B cell (primary cell): ENCODE measurements at regions of chr12 and their contacts with region 1.

Region 1: DNA sequence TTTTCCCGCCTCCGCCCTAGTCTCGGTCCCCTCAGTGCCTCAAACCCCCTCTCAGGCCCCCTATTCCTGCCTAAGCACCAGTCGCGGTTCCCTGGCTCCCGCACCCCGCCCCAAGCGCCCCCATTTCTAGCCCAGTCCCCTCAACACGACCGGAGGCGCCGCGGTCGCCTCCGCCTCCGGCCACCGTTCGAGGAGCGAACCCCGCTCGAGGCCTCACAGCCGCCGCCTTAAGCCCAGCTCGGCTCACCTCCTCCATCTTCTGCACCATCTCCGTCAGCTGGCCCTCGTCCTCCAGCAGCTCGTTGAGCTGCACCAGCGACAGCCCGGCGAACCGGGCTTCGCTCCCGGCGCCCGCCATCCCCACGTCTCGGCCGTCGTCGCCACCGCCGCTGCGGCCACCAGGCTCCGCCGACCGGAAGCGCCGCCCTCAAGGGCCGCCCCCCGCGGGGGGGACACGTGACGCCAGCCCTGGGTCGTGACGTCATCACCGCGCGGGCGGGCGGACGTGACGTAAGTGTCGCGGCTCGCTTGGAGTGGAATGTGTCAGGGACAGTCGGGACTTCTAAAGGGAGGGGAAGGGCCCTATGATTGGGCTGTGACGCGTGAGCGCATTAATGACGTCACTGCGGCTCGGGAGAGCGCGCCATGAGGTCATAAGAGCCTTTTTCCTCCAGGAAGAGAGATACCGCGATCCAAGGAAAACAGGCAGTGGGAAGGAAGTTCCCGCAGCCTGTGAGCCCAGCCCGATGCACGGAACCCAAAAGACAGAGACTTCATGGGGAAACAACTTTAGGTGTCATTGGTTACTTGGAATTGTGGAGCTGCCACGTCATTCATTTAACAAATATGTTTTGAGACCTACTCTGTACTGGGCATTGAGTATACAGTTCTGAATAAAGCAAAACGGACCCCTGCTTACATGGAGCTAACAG is at the start of gene VPS37B:
- DNase-seq: peak; percentile 95
- ATAC-seq: peak; percentile 29
- H3K4me3 ChIP-seq: peak within 1 kb of the TSS; percentile 74 to 98 (median 97)
- H3K4me3 Mint-ChIP-seq: peak within 1 kb of the TSS; percentile 96
- H3K27ac ChIP-seq: peak within 1 kb of the TSS; percentile 90 to 99
- H3K27ac Mint-ChIP-seq: peak within 1 kb of the TSS; percentile 94
- H3K4me1 ChIP-seq: peaks cover 90 to 91% of the 10 kb centered on the region in 2 donors
- H3K4me1 Mint-ChIP-seq: peaks cover 90% of the 10 kb centered on the region
- H3K27me3 ChIP-seq: no peaks in the 10 kb centered on the region
- H3K27me3 Mint-ChIP-seq: no peaks in the 10 kb centered on the region
- CTCF ChIP-seq: no peak
- total RNA-seq, gene VPS37B: 87.2 and 88.1 TPM in 2 replicates

Region 2: DNA sequence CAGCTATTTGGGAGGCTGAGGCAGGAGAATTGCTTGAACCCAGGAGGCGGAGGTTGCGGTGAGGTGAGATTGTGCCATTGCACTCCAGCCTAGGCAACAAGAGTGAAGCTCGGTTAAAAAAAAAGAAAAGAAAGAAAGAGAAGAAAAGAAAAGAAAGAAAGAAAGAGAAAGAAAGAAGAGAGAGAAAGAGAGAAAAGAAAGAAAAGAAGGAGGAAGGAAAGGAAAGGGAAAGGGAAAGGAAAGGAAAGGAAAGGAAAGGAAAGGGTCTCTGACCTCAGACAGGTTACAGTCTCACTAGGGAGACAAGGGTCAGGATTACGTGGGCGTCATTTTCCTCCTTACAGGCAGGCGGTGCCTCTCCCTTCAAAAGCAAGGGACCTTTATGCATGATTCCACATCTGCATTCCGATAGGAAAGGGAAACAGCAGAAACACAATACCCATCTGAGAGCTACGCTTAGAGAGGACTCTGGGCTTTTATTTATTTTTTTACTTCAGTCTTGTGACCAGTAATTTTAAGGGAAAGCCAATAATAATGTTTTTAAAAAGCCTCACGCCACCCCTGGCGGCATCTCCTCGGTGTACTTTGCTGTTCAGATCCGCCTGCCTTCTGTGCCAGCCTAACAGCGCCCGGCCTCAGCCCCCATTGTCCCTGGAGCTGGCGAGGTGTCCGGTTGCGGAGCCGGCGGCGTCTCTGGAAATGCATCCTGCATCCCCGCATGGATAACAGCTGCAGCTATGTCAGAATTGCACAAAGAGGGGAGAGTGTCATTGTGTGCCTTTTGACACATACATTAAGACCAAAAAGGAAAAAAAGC is 61.7 kb before region 1 on chr12:
- CTCF ChIA-PET with region 1: interaction called, 5 read pairs
- POLR2A ChIA-PET with region 1: no interaction called
- intact Hi-C with region 1: loop called (anchors 2 kb)
- DNase-seq: peak; percentile 65
- ATAC-seq: no peak
- H3K4me3 ChIP-seq: peak overlapping the region; percentile 24 to 99 (median 45)
- H3K4me3 Mint-ChIP-seq: peak overlapping the region; percentile 98
- H3K27ac ChIP-seq: peak overlapping the region; percentile 25 to 38
- H3K27ac Mint-ChIP-seq: peak overlapping the region; percentile 88
- H3K4me1 ChIP-seq: peaks cover 32 to 35% of the 10 kb centered on the region in 2 donors
- H3K4me1 Mint-ChIP-seq: peaks cover 40% of the 10 kb centered on the region
- H3K27me3 ChIP-seq: no peaks in the 10 kb centered on the region
- H3K27me3 Mint-ChIP-seq: no peaks in the 10 kb centered on the region
- CTCF ChIP-seq: peak; percentile 34

Region 3: DNA sequence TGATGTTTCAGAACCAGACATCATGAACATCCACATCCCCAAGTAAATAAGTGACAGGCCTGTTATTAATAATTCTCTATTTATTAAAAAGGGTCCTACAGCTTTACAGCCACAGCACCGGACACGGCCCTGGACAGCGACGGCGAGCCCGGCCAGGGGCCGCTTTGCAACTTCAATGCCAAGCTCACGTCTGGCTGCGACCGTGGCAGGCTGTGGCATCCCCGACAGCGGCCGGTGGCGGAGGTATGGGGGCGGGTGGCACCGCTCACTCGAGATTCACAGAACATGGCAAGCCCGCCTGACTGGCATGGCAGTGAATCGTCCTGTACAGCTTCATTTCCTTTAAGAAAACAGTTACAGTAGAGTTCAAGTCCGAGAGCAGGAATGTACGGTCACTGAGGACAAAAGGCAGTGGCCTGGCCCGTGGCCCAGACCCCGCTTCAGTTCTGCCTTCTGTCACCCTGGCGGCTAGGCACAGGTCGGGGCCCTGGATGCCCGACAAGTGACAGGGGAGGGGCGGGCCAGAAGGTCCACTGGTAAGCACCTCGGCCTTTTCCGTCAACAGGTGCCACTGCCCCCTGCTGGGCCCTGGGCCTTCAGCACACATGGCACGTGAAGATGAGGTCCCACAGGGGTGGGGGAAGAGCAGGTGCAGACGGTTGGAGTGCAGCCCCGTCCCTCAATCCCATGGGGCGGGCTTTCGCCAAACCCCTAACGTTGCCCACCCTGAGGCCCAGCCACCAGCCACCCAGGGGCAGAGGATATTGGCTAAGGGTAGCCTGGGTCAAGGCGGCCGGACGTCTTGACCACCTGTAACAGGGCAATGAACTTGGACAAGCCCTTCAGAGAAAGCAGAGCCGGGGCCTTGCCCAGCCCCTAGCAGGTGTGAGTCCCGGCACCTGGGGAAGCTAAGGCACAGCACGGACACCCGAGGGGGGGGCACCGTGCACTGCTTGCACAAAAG is 30.4 kb before region 1 on chr12:
- CTCF ChIA-PET with region 1: interaction called, 50 read pairs
- POLR2A ChIA-PET with region 1: interaction called, 11 read pairs
- intact Hi-C with region 1: loop called (anchors 2 kb)
- DNase-seq: peak; percentile 66
- ATAC-seq: peak; percentile 40
- H3K4me3 ChIP-seq: no peak overlapping the region
- H3K4me3 Mint-ChIP-seq: no peak overlapping the region
- H3K27ac ChIP-seq: no peak overlapping the region
- H3K27ac Mint-ChIP-seq: peak overlapping the region; percentile 83
- H3K4me1 ChIP-seq: peaks cover 54 to 73% of the 10 kb centered on the region in 2 donors
- H3K4me1 Mint-ChIP-seq: peaks cover 79% of the 10 kb centered on the region
- H3K27me3 ChIP-seq: no peaks in the 10 kb centered on the region
- H3K27me3 Mint-ChIP-seq: no peaks in the 10 kb centered on the region
- CTCF ChIP-seq: peak; percentile 53

Region 4: DNA sequence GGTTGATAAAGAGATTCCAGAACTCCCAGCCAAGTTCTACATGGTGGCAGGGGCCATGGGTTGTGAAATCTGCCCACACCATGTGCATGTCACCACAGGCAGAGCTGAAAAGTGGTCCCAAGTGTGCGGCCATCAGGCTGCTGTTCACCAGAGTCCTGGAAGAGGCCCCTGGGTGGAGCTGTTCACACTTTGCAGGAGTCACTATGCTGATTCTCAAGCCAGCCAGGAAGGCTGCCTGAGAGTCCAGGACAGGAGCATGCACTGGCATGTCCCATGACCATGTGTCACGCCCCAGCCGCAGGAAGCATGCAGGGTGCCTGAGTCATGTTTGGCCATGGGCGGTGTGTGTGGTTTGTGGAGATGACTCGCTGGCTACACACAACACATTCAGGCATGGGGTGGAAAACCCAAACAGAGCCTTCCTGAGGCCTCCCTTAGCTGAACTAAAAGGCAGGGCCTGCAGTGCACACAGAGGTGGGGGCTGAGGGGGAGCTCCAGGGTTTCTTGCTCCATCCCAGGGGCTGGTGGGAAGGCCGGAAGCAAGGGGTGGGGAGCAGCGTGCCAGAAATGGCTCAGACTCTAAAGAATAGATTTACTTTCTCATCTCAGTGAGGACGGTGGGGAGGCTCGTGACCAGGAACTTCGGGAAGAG is 50.8 kb after region 1 on chr12:
- CTCF ChIA-PET with region 1: interaction called, 29 read pairs
- POLR2A ChIA-PET with region 1: interaction called, 3 read pairs
- intact Hi-C with region 1: loop called (anchors 2 kb)
- DNase-seq: peak; percentile 46
- ATAC-seq: peak; percentile 67
- H3K4me3 ChIP-seq: no peak overlapping the region
- H3K4me3 Mint-ChIP-seq: peak overlapping the region; percentile 54
- H3K27ac ChIP-seq: no peak overlapping the region
- H3K27ac Mint-ChIP-seq: peak overlapping the region; percentile 47
- H3K4me1 ChIP-seq: peaks cover 25 to 33% of the 10 kb centered on the region in 2 donors
- H3K4me1 Mint-ChIP-seq: peaks cover 42% of the 10 kb centered on the region
- H3K27me3 ChIP-seq: no peaks in the 10 kb centered on the region
- H3K27me3 Mint-ChIP-seq: no peaks in the 10 kb centered on the region
- CTCF ChIP-seq: no peak

Region 5: GRCh38 chr12:122974274-122974891 is 78.4 kb after region 1 on chr12:
- CTCF ChIA-PET with region 1: interaction called, 3 read pairs
- POLR2A ChIA-PET with region 1: no interaction called
- intact Hi-C with region 1: loop called (anchors 2 kb)
- DNase-seq: peak; percentile 98
- ATAC-seq: peak; percentile 89
- H3K4me3 ChIP-seq: peak overlapping the region; percentile 76 to 97 (median 90)
- H3K4me3 Mint-ChIP-seq: peak overlapping the region; percentile 100
- H3K27ac ChIP-seq: peak overlapping the region; percentile 91 to 99
- H3K27ac Mint-ChIP-seq: peak overlapping the region; percentile 98
- H3K4me1 ChIP-seq: peaks cover 19 to 36% of the 10 kb centered on the region in 2 donors
- H3K4me1 Mint-ChIP-seq: peaks cover 32% of the 10 kb centered on the region
- H3K27me3 ChIP-seq: no peaks in the 10 kb centered on the region
- H3K27me3 Mint-ChIP-seq: no peaks in the 10 kb centered on the region
- CTCF ChIP-seq: no peak